K562 (cell line): ENCODE measurements at regions of chr11 and their contacts with region 1.

Region 1: GRCh38 chr11:74948898-74949747 is at the starts of genes SPCS2 and XRRA1:
- DNase-seq: peak; percentile 94 to 99 (median 95)
- ATAC-seq: peak; percentile 95
- H3K4me3 ChIP-seq: peak within 1 kb of the TSS; percentile 93
- H3K27ac ChIP-seq: peak within 1 kb of the TSS; percentile 81
- H3K4me1 ChIP-seq: peaks cover 6 to 19% of the 10 kb centered on the region in 2 experiments; a peak in 3 of 5 replicates
- H3K27me3 ChIP-seq: no peaks in the 10 kb centered on the region
- CTCF ChIP-seq: no peak
- EP300 ChIP-seq: peak; percentile 41; the same call in 1 of the 2 replicates
- POLR2A ChIP-seq: peak; percentile 95
- RAD21 ChIP-seq: no peak
- polyA plus RNA-seq, gene SPCS2: 372 to 458 TPM
- polyA plus RNA-seq, gene XRRA1: 5.0 to 8.9 TPM

Region 2: GRCh38 chr11:74877132-74877531 is 72.0 kb before region 1 on chr11:
- CTCF ChIA-PET with region 1: no interaction called
- POLR2A ChIA-PET with region 1: no interaction called
- in situ Hi-C with region 1: no loop called
- intact Hi-C with region 1: no loop called
- DNase-seq: peak; percentile 32 to 59 (median 56)
- ATAC-seq: no peak
- H3K4me3 ChIP-seq: no peak overlapping the region
- H3K27ac ChIP-seq: no peak overlapping the region
- H3K4me1 ChIP-seq: no peaks in the 10 kb centered on the region
- H3K27me3 ChIP-seq: no peaks in the 10 kb centered on the region
- CTCF ChIP-seq: peak in 2 of 3 experiments; percentile 45 to 55; a peak in 3 of 6 replicates
- EP300 ChIP-seq: no peak
- POLR2A ChIP-seq: no peak
- RAD21 ChIP-seq: peak in 1 of 2 experiments; percentile 28; a peak in 1 of 4 replicates

Region 3: GRCh38 chr11:74937696-74938475 is 11.2 kb before region 1 on chr11:
- CTCF ChIA-PET with region 1: interaction called, 3 read pairs
- POLR2A ChIA-PET with region 1: interaction called, 27 read pairs
- in situ Hi-C with region 1: no loop called
- intact Hi-C with region 1: no loop called
- DNase-seq: no peak
- ATAC-seq: no peak
- H3K4me3 ChIP-seq: no peak overlapping the region
- H3K27ac ChIP-seq: no peak overlapping the region
- H3K4me1 ChIP-seq: peaks cover 0 to 13% of the 10 kb centered on the region in 2 experiments; a peak in 2 of 5 replicates
- H3K27me3 ChIP-seq: no peaks in the 10 kb centered on the region
- CTCF ChIP-seq: no peak
- EP300 ChIP-seq: no peak
- POLR2A ChIP-seq: no peak
- RAD21 ChIP-seq: no peak

Region 4: DNA sequence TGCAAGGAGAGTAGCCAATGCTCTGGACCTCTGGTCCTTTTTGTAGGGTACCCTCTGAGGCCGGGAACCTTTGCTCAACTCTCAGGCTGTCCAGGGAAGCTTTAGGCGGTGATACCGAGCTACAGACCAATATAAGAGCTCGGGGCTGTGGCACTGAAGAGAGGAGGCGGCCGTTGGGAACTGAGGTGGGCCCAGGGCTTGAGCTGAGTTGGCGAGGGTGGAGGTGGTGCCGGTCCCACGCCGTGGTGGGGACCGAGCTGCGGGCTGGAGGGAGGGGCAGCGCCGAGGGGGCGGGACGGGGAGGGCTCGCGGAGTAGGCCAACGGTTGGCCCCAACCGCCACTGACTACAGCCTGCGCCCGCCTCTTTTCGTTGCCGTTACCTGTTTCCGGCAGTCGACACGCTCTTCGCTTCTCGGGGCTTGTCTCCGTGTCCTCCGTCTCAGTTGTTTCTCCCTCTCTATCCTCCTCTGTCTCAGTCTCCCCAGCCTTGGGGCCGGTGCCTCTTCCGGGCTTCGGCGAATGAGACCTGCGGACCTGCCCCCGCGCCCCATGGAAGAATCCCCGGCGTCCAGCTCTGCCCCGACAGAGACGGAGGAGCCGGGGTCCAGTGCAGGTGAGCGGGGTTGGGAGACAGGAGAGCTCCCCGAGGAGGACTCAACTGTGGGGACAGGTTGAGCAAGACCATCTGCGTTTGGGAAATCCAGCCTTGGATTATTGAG is 39.6 kb after region 1 on chr11 and contains the start of gene NEU3:
- CTCF ChIA-PET with region 1: no interaction called
- POLR2A ChIA-PET with region 1: interaction called, 9 read pairs
- in situ Hi-C with region 1: no loop called
- intact Hi-C with region 1: loop called (anchors 2 kb)
- DNase-seq: peak; percentile 90 to 93 (median 92)
- ATAC-seq: peak; percentile 92
- H3K4me3 ChIP-seq: peak within 1 kb of the TSS; percentile 97
- H3K27ac ChIP-seq: peak within 1 kb of the TSS; percentile 93
- H3K4me1 ChIP-seq: peaks cover 4 to 25% of the 10 kb centered on the region in 2 experiments; a peak in 4 of 5 replicates
- H3K27me3 ChIP-seq: no peaks in the 10 kb centered on the region
- CTCF ChIP-seq: no peak
- EP300 ChIP-seq: no peak; the same call in 1 of the 2 replicates
- POLR2A ChIP-seq: peak; percentile 91
- RAD21 ChIP-seq: no peak
- polyA plus RNA-seq, gene NEU3: 6.2 to 7.2 TPM